Activated CD4-positive, alpha-beta memory T cell treated with anti-CD3 and anti-CD28 coated beads for 36 hours (primary cell): ENCODE measurements at regions of chr3 and their contacts with region 1.

Region 1: GRCh38 chr3:169744366-169745054 is 20.4 kb downstream of the TERC start:
- DNase-seq: no peak
- H3K4me3 Mint-ChIP-seq: no peak overlapping the region
- H3K27ac Mint-ChIP-seq: no peak overlapping the region
- H3K4me1 Mint-ChIP-seq: peaks cover 11% of the 10 kb centered on the region
- H3K27me3 Mint-ChIP-seq: peaks cover 19% of the 10 kb centered on the region

Region 2: GRCh38 chr3:169149349-169149890 is 595.1 kb before region 1 on chr3:
- CTCF ChIA-PET with region 1: interaction called, 8 read pairs
- POLR2A ChIA-PET with region 1: no interaction called
- intact Hi-C with region 1: loop called (anchors 2 kb)
- DNase-seq: peak; percentile 84
- H3K4me3 Mint-ChIP-seq: peak overlapping the region; percentile 36
- H3K27ac Mint-ChIP-seq: no peak overlapping the region
- H3K4me1 Mint-ChIP-seq: peaks cover 21% of the 10 kb centered on the region
- H3K27me3 Mint-ChIP-seq: peaks cover 57% of the 10 kb centered on the region

Region 3: DNA sequence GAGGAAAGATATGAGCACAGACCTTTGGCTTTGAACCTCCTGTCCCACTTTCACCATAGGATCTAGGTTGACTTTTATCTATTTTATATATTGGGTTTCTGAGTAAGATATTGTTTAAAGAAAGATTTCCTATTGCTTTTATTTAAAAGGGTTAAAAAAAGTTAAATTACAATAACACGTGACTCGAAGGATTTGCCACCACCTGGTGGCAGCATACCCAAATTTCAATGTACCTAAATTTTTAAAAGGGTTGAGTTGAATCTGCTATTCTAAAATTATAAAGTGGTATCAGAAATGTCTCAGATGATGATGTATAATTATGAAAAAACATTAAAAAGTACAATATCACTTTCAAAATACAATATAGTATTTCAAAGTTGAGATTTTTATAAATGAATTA is 449.4 kb before region 1 on chr3:
- CTCF ChIA-PET with region 1: interaction called, 3 read pairs
- POLR2A ChIA-PET with region 1: no interaction called
- intact Hi-C with region 1: loop called (anchors 5 kb)
- DNase-seq: no peak
- H3K4me3 Mint-ChIP-seq: no peak overlapping the region
- H3K27ac Mint-ChIP-seq: no peak overlapping the region
- H3K4me1 Mint-ChIP-seq: no peaks in the 10 kb centered on the region
- H3K27me3 Mint-ChIP-seq: no peaks in the 10 kb centered on the region

Region 4: DNA sequence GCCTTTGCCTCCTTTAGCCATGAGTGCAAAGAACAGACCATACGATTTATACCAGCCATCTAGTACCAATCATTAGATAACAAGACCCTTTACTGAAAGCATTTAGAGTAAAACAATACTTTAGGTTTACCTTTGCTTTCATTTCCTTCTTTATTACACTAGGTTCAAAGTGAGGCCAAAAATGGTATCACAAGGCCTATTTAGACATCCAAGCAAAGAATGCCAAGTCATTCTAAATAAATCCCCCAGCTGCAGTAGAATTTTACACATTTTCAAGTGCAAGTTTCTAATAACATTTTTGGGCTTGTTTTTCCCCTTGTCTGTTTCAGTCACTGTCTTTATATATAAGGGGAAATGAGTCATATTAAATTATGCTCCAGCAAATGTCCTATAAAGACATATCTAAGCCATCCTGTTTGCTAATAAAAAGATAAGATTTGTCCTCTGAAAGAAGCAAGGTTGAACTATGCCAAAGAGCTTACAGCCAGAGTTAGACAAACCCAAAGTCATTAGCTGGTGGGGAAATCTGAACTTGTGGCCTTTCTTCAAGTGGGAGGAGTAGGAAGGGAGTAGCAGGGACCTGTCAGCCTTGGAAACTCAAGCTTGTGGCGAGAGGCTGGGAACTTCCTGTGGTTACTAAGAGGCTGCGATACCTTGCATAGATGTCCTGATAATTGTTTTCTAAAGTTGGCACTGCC is 313.7 kb before region 1 on chr3:
- CTCF ChIA-PET with region 1: no interaction called
- POLR2A ChIA-PET with region 1: no interaction called
- intact Hi-C with region 1: no loop called
- DNase-seq: no peak
- H3K4me3 Mint-ChIP-seq: no peak overlapping the region
- H3K27ac Mint-ChIP-seq: no peak overlapping the region
- H3K4me1 Mint-ChIP-seq: peaks cover 5% of the 10 kb centered on the region
- H3K27me3 Mint-ChIP-seq: peaks cover 3% of the 10 kb centered on the region

Region 5: GRCh38 chr3:169564883-169565282 is 179.6 kb before region 1 on chr3:
- CTCF ChIA-PET with region 1: no interaction called
- POLR2A ChIA-PET with region 1: no interaction called
- intact Hi-C with region 1: loop called (anchors 10 kb)
- DNase-seq: no peak
- H3K4me3 Mint-ChIP-seq: no peak overlapping the region
- H3K27ac Mint-ChIP-seq: no peak overlapping the region
- H3K4me1 Mint-ChIP-seq: peaks cover 4% of the 10 kb centered on the region
- H3K27me3 Mint-ChIP-seq: peaks cover 3% of the 10 kb centered on the region

Region 6: GRCh38 chr3:169641167-169641566 is 103.3 kb before region 1 on chr3:
- CTCF ChIA-PET with region 1: no interaction called
- POLR2A ChIA-PET with region 1: no interaction called
- intact Hi-C with region 1: no loop called
- DNase-seq: no peak
- H3K4me3 Mint-ChIP-seq: no peak overlapping the region
- H3K27ac Mint-ChIP-seq: no peak overlapping the region
- H3K4me1 Mint-ChIP-seq: no peaks in the 10 kb centered on the region
- H3K27me3 Mint-ChIP-seq: peaks cover 18% of the 10 kb centered on the region

Region 7: DNA sequence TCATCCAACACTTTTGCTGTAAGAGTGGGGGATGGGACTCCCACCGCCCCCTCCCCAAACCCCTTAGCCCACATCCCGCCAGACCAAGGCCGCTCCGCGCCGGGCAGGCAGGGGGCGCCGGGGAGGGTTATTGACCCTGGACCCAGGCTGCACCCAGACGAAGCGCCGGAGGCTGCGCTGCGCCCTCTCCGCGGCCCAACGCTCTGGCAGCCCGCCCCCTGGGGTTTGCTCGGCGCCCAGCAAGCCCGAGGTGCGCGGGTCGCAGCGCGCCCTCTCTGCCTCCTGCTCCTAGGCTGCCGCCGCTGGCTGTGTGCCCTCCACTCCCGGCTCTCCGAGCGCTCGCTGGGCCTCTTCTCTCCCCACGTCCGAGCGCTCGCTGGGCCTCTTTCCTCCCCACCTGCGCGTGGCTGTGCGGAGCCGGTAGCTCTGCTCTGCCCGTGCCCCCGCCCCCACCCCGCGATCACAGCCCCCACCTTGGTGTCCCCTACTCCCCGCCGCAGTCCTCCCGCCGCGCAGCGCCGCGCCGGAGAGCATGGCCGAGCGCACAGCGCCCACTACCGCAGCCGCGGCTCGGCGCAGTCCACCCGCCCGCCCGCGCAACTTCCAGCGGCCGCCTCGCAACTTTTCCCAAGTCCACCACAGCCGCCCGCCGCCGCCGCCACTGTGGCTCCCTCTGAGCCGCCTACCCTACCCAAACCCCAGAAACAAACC is 82.2 kb before region 1 on chr3:
- CTCF ChIA-PET with region 1: interaction called, 3 read pairs
- POLR2A ChIA-PET with region 1: no interaction called
- intact Hi-C with region 1: loop called (anchors 2 kb)
- DNase-seq: peak; percentile 57
- H3K4me3 Mint-ChIP-seq: peak overlapping the region; percentile 71
- H3K27ac Mint-ChIP-seq: no peak overlapping the region
- H3K4me1 Mint-ChIP-seq: peaks cover 39% of the 10 kb centered on the region
- H3K27me3 Mint-ChIP-seq: peaks cover 83% of the 10 kb centered on the region